ENCODE measurements at regions of chr17 and their contacts with region 1.

Region 1: GRCh38 chr17:66567234-66568170 is 265.1 kb downstream of the PRKCA start:
- DNase-seq: peak; percentile 89
- H3K4me3 Mint-ChIP-seq: no peak overlapping the region
- H3K27ac Mint-ChIP-seq: no peak overlapping the region
- H3K4me1 Mint-ChIP-seq: peaks cover 48% of the 10 kb centered on the region
- H3K27me3 Mint-ChIP-seq: no peaks in the 10 kb centered on the region

Region 2: DNA sequence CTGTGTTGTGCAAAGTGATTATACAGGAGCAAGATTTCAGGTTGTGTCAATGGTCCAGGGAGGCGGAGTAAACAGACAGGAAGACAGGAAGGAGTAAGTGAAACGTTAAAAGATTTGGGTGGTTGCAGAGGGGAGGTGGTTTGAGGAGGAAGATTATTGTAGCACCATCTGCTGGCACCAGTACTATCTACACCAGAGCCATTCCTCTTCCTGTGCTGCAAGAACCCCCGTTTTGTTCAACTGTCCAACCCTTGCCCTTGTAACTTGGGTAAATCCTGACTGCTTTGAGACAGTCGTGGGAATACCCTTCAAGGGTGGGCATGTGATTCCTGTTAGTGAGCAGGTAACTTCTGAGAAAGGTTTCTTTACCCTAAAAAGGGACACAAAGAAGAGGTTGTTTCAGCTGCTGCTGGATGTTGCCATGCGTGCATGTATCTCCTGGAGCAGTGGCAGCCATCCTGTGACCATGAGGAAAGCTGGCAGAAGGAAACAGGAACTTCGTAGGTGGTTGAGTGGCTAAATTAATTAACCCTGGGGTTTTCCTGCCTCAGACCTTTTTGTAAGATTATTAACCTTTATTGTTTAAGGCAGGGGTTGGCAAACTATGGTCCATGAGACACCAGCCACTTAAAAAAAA is 141.0 kb before region 1 on chr17:
- CTCF ChIA-PET with region 1: interaction called, 4 read pairs
- intact Hi-C with region 1: loop called (anchors 1 kb)
- DNase-seq: peak; percentile 68
- H3K4me3 Mint-ChIP-seq: no peak overlapping the region
- H3K27ac Mint-ChIP-seq: peak overlapping the region; percentile 83
- H3K4me1 Mint-ChIP-seq: peaks cover 81% of the 10 kb centered on the region
- H3K27me3 Mint-ChIP-seq: no peaks in the 10 kb centered on the region

Region 3: GRCh38 chr17:66755101-66755904 is 187.8 kb after region 1 on chr17:
- CTCF ChIA-PET with region 1: no interaction called
- intact Hi-C with region 1: no loop called
- DNase-seq: no peak
- H3K4me3 Mint-ChIP-seq: no peak overlapping the region
- H3K27ac Mint-ChIP-seq: no peak overlapping the region
- H3K4me1 Mint-ChIP-seq: no peaks in the 10 kb centered on the region
- H3K27me3 Mint-ChIP-seq: no peaks in the 10 kb centered on the region

Measured in activated naive CD4-positive, alpha-beta T cell treated with anti-CD3 and anti-CD28 coated beads for 36 hours (primary cell).